HepG2 (cell line): ENCODE measurements at regions of chr5 and their contacts with region 1.

Region 1: DNA sequence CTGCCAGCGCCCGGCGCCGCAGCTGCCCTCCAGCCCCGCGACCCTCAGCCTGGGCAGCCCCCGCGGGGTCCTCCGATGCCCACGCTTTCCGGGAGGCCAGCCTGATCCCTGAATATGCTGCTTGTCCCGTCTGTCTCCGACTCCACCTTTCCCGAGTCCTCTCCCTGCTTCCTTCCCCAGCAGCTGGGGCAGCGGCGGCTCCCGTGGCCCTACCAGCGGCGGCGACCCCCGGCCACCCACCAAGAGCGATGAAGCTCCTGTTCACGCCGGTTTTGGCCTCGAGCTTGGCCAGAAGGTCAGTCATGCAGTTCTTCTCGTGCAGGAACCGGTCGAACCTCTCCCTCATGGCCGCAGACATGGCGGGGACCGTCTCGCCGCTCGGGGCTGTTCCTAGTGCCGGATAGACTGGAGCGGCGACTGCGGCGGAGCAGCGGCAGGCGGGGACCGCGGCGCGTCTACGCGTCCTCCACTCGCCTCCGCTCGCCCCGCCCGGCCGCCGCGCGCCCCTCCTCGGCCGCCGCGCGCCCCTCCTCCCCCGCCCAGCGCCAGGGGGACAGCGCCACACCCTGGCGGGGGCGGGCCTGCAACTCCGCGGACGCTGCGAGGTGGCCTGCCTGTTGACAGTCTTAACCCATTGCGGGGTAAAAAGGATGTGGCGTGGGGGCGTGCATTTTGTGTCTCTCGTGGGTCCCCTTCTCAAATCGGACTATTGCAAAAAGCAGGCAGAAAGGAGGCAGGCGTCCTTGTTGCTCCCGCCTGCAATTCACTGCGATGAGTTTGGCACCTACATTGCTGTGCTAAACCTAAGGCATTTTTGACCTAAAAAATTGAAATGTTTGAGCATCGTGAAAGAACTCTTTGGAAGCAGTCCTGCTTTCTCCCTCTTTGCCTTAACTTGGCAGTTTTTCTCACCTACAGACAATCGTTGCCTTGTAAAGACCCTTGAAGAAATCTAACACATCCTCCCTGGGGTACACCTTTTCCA is at the start of gene REEP5:
- DNase-seq: peak; percentile 56
- ATAC-seq: peak; percentile 92
- H3K4me3 ChIP-seq: peak within 1 kb of the TSS; percentile 91 to 99 (median 98)
- H3K27ac ChIP-seq: peak within 1 kb of the TSS; percentile 91
- H3K4me1 ChIP-seq: peaks cover 50% of the 10 kb centered on the region
- H3K27me3 ChIP-seq: no peaks in the 10 kb centered on the region
- CTCF ChIP-seq: peak; percentile 81
- EP300 ChIP-seq: no peak
- POLR2A ChIP-seq: peak; percentile 93 to 95
- RAD21 ChIP-seq: peak; percentile 83
- total RNA-seq, gene REEP5: 26.3 and 49.4 TPM in 2 replicates

Region 2: GRCh38 chr5:112691758-112692157 is 230.4 kb before region 1 on chr5:
- CTCF ChIA-PET with region 1: no interaction called
- POLR2A ChIA-PET with region 1: no interaction called
- in situ Hi-C with region 1: no loop called
- intact Hi-C with region 1: loop called (anchors 1 kb)
- DNase-seq: peak; percentile 65
- ATAC-seq: peak; percentile 92
- H3K4me3 ChIP-seq: no peak overlapping the region
- H3K27ac ChIP-seq: no peak overlapping the region
- H3K4me1 ChIP-seq: no peaks in the 10 kb centered on the region
- H3K27me3 ChIP-seq: no peaks in the 10 kb centered on the region
- CTCF ChIP-seq: peak; percentile 87
- EP300 ChIP-seq: no peak
- POLR2A ChIP-seq: no peak
- RAD21 ChIP-seq: peak; percentile 50; the same call in 1 of the 2 replicates

Region 3: GRCh38 chr5:112902561-112902960 is 19.6 kb before region 1 on chr5:
- CTCF ChIA-PET with region 1: no interaction called
- POLR2A ChIA-PET with region 1: interaction called, 13 read pairs
- in situ Hi-C with region 1: no loop called
- intact Hi-C with region 1: no loop called
- DNase-seq: no peak
- ATAC-seq: no peak
- H3K4me3 ChIP-seq: no peak overlapping the region
- H3K27ac ChIP-seq: no peak overlapping the region
- H3K4me1 ChIP-seq: no peaks in the 10 kb centered on the region
- H3K27me3 ChIP-seq: no peaks in the 10 kb centered on the region
- CTCF ChIP-seq: no peak
- EP300 ChIP-seq: no peak
- POLR2A ChIP-seq: no peak
- RAD21 ChIP-seq: no peak

Region 4: DNA sequence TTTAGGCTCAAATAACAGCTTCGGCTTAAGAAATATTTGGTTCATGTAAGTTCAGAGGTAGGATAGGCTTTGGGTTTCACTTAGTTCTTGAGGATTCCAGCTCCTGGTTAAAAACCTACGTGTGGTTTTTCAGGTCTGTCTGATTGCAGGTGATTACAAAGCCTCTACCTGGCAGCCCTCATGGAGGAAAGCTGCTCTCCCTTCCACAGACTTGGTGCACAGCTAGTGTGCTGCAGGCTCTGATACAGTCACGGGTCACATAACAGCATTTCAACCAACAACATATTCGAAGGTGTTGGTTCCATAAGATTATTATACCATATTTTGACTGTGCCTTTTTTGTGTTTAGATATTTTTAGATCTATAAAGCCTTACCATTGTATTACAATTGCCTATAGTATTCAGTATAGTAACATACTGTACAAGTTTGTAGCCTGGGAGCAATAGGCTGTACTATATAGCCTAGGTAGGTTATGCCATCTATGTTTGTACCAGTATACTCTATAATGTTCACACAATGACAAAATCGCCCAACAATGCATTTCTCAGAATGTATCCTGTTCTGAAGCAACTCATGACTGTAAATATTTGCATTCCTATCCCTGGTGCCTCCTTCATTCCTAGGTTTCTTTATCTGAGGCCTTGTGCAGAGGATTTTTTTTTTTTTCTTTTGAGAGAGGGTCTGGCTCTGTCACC is 46.4 kb after region 1 on chr5:
- CTCF ChIA-PET with region 1: no interaction called
- POLR2A ChIA-PET with region 1: interaction called, 13 read pairs
- in situ Hi-C with region 1: no loop called
- intact Hi-C with region 1: no loop called
- DNase-seq: peak; percentile 93
- ATAC-seq: peak; percentile 92
- H3K4me3 ChIP-seq: peak overlapping the region in 2 of 3 experiments; percentile 1 to 47; a peak in 2 of 6 replicates
- H3K27ac ChIP-seq: peak overlapping the region; percentile 69
- H3K4me1 ChIP-seq: peaks cover 52% of the 10 kb centered on the region
- H3K27me3 ChIP-seq: no peaks in the 10 kb centered on the region
- CTCF ChIP-seq: no peak
- EP300 ChIP-seq: peak in 1 of 2 experiments; percentile 88; a peak in 2 of 4 replicates
- POLR2A ChIP-seq: no peak
- RAD21 ChIP-seq: no peak